PC-9 (cell line): ENCODE measurements at regions of chr1 and their contacts with region 1.

Region 1: DNA sequence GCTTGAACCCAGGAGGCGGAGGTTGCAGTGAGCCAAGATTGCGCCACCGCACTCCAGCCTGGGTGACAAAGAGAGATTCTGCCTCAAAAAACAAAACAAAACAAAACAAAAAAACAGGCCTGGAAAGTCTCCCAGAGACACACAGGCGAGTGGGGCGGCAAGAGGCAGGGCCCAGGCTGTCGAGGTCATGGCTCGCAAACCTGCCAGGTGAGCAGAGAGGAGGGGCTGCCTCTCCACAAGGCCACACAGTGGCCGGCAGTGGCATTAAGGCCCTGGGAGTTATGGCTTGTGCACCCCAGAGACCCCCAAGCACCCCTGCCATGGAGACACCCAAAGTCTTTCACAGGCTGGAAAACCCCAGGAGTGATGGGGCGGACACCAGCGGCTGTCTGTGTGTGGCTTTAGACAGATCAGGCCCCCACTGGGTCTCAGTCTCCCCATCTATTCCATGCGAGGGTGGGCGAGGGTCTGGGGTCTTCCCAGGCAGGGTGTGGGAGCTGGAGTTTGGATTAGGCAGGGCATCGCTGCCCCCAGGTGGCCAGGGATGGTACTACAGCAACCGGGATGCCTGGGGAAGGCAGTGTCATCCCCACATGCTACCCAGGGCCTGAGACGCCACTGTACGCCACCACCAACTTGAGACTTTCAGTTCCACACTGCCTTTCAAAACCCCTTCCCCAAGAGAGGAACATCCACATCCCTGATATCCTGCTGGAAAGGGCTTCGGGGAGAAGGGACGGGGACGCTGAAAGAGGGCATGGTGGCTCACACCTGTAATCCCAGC is 7.3 kb upstream of the CTRC start:
- DNase-seq: peak in 1 of 2 experiments; percentile 59
- H3K4me3 ChIP-seq: no peak overlapping the region
- H3K27ac ChIP-seq: no peak overlapping the region
- H3K4me1 ChIP-seq: 0 out of 2 replicates have a peak, but pooled peaks cover 6% of the 10 kb centered on the region
- H3K27me3 ChIP-seq: no peaks in the 10 kb centered on the region
- CTCF ChIP-seq: peak; percentile 94

Region 2: DNA sequence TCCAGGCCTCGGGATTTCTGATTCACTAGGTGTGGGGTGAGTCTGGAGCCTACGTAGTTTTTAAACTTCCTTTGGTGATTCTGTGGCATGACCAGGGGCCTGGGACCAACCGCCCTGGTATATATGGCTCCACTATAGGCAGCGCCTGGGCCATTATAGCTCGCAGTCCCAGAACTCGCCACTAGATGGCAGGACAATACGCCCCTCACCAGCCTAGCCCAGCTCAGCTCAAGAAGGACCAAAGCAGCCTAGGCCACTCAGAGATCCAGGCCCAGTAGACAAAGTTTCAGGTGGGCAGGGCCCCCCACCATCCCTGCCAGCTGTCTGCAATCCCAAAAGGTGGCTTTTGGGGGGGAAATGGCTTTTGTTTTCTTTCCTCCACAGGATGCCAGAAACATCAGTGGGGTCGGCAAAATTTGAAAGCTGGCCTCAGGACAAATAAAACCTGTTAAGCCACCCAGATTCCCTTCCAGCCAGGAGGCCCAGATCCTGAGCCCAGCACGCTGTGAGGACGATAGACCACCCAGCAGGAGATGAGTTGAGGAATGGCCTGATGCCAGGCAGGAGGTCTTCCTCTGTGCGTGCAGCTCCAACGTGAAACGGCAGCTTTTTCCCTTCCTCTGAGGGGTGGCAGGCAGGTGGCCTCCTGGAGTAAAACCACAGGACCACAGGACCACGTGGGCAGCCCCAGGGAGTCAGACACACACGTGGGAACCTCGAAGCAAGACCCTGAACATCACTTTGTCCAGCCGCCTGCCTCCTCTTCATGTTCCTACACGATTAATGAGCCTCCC is 302.3 kb before region 1 on chr1:
- CTCF ChIA-PET with region 1: no interaction called
- POLR2A ChIA-PET with region 1: no interaction called
- intact Hi-C with region 1: loop called (anchors 2 kb)
- DNase-seq: peak in 1 of 2 experiments; percentile 73
- H3K4me3 ChIP-seq: no peak overlapping the region
- H3K27ac ChIP-seq: no peak overlapping the region
- H3K4me1 ChIP-seq: no peaks in the 10 kb centered on the region
- H3K27me3 ChIP-seq: no peaks in the 10 kb centered on the region
- CTCF ChIP-seq: peak; percentile 87

Region 3: GRCh38 chr1:15501208-15502032 is 70.4 kb after region 1 on chr1:
- CTCF ChIA-PET with region 1: interaction called, 4 read pairs
- POLR2A ChIA-PET with region 1: no interaction called
- intact Hi-C with region 1: loop called (anchors 10 kb)
- DNase-seq: peak; percentile 39 to 65
- H3K4me3 ChIP-seq: no peak overlapping the region
- H3K27ac ChIP-seq: no peak overlapping the region
- H3K4me1 ChIP-seq: no peaks in the 10 kb centered on the region
- H3K27me3 ChIP-seq: no peaks in the 10 kb centered on the region
- CTCF ChIP-seq: peak; percentile 74